ENCODE measurements at regions of chr6 and their contacts with region 1.

Region 1: GRCh38 chr6:624979-625378 is 31.9 kb downstream of the HUS1B start:
- DNase-seq: no peak

Region 2: GRCh38 chr6:766625-767024 is 141.6 kb after region 1 on chr6:
- intact Hi-C with region 1: loop called (anchors 10 kb)
- DNase-seq: no peak